ENCODE measurements at regions of chr1 and their contacts with region 1.

Region 1: DNA sequence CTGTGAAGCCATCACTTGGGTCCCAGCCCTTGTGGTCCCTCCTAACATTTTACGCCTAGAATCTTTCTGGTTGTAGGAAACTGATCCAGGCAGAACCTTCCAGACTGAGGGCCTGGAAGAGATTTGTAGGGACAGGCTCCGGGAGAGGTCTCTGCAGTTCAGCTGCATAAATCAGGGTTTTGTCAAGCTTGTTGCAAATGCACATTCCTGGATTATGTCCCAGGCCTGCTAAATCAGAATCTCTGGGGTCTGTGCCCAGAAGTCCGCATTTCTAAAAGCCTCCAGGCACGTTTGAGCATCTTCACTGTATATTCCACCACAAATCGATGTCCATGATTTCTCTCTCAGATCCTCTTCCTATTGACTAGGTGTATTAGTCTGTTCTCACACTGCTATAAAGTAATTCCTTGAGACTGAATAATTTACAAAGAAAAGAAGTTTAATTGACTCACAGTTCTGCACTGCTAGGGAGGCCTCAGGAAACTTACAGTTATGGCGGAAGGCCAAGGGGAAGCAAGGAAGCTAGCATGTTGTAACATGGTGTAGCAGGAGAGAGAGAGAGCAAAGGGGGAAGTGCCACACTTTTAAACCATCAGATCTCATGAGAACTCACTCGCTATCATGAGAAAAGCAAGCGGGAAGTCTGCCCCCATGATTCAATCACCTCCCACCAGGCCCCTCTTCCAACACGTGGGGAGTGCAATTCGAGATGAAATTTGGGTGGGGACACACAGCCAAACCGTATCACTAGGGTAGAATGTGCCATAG is 1.2 kb upstream of the FHAD1 start:
- DNase-seq: no peak
- ATAC-seq: no peak
- H3K4me3 Mint-ChIP-seq: no peak overlapping the region
- H3K27ac Mint-ChIP-seq: no peak overlapping the region
- H3K4me1 Mint-ChIP-seq: peaks cover 38% of the 10 kb centered on the region
- H3K27me3 Mint-ChIP-seq: peaks cover 47% of the 10 kb centered on the region

Region 2: GRCh38 chr1:15196807-15197530 is 48.8 kb before region 1 on chr1:
- POLR2A ChIA-PET with region 1: no interaction called
- DNase-seq: no peak
- ATAC-seq: no peak
- H3K4me3 Mint-ChIP-seq: no peak overlapping the region
- H3K27ac Mint-ChIP-seq: no peak overlapping the region
- H3K4me1 Mint-ChIP-seq: no peaks in the 10 kb centered on the region
- H3K27me3 Mint-ChIP-seq: peaks cover 7% of the 10 kb centered on the region

Region 3: DNA sequence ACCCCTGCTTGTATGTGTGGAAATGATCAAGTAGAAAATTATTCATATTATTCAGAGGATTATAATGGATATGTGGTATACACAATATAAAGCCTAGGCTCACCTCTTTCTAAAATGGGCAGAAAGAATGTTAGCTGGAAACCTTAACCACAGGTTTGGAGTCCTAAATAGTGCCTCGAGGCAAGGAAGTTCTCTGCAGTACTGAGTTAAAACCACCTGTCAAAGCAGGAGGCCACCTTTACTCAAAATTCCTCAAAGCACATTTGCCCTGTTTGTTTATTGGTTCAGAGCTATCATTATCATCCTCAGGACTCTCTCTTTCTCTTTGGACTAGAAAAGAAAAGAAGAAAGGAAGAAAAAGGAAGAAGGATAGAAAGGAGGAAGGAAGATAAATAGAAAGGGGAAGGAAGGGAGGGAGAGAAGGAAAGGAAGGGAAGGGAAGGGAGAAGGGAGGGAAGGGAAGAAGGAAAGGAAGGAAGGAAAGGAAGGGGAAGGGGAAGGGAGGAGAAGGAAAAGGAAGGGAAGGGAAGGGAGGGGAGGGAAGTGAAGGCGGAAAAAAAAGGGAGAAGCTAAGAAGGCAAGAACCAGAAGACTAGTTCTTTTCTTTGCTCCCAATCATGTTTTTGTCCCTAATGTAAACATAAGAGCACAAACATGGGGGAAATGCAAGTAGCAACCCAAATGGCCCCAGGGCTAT is 23.3 kb before region 1 on chr1:
- POLR2A ChIA-PET with region 1: interaction called, 10 read pairs
- DNase-seq: no peak
- ATAC-seq: no peak
- H3K4me3 Mint-ChIP-seq: no peak overlapping the region
- H3K27ac Mint-ChIP-seq: no peak overlapping the region
- H3K4me1 Mint-ChIP-seq: peaks cover 2% of the 10 kb centered on the region
- H3K27me3 Mint-ChIP-seq: peaks cover 25% of the 10 kb centered on the region

Region 4: GRCh38 chr1:15288173-15288926 is 42.6 kb after region 1 on chr1:
- POLR2A ChIA-PET with region 1: no interaction called
- DNase-seq: no peak
- ATAC-seq: no peak
- H3K4me3 Mint-ChIP-seq: no peak overlapping the region
- H3K27ac Mint-ChIP-seq: no peak overlapping the region
- H3K4me1 Mint-ChIP-seq: no peaks in the 10 kb centered on the region
- H3K27me3 Mint-ChIP-seq: peaks cover 6% of the 10 kb centered on the region

Measured in activated naive CD8-positive, alpha-beta T cell treated with anti-CD3 and anti-CD28 coated beads, Interleukin-2, amount 10 ng/mL, durations not matched to agents 7 days and 5 days (primary cell).